Mucosa of descending colon (tissue), 3 donors: ENCODE measurements at regions of chr16 and their contacts with region 1.

Region 1: GRCh38 chr16:52561910-52562741 is 15.2 kb upstream of the TOX3 start:
- DNase-seq: peak; percentile 59 to 72 (median 62)
- ATAC-seq: peak; percentile 80
- H3K4me3 ChIP-seq: no peak overlapping the region
- H3K4me1 ChIP-seq: peaks cover 49% of the 10 kb centered on the region
- CTCF ChIP-seq: no peak

Region 2: DNA sequence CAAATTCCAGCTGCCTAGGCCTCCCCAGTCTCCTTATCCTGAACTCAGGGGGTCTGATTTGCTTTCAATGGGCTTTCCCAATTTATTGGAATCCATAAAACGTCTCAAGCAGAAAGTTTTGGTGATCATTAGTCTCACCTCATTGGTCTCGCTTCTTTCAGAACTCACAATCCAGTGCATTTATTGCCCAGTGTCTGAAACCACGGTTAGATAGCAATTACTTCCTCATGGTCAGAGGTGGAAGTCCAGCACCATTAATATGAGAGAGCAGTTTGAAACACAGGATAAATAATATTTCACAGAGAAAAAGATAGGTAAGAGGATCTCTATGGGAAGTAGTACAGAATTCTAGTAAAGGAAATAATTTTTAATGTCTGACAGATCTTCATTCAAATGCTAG is 143.9 kb before region 1 on chr16:
- intact Hi-C with region 1: no loop called
- DNase-seq: no peak
- ATAC-seq: no peak
- H3K4me3 ChIP-seq: no peak overlapping the region
- H3K4me1 ChIP-seq: no peaks in the 10 kb centered on the region
- CTCF ChIP-seq: no peak

Region 3: GRCh38 chr16:52611817-52612673 is 49.9 kb after region 1 on chr16:
- intact Hi-C with region 1: loop called in 1 of 2 experiments (anchors 5 kb)
- DNase-seq: peak in 2 of 3 donors; percentile 32 to 81
- ATAC-seq: peak; percentile 96
- H3K4me3 ChIP-seq: no peak overlapping the region
- H3K4me1 ChIP-seq: peaks cover 12% of the 10 kb centered on the region
- CTCF ChIP-seq: no peak

Region 4: DNA sequence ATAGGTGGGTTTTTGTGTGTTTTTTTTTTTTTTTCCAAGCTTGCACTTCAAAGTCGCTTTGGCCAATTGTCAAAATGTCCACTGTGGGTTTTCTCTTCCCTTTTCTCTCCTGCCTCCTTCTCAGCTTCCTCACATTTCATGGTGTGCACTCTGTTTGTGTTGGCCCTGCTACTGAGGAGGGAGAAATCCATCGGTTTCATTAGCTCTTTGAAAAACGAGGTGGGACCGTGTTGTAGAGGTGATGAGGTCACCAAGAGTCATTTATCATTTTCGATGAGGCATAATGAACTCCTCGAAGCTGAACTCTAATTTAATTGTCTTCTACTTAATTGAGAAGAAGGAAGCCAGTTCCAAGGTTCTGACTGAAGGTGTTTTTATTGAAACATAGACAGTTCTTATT is 159.2 kb after region 1 on chr16:
- intact Hi-C with region 1: no loop called
- DNase-seq: no peak
- ATAC-seq: no peak
- H3K4me3 ChIP-seq: no peak overlapping the region
- H3K4me1 ChIP-seq: no peaks in the 10 kb centered on the region
- CTCF ChIP-seq: no peak

Region 5: GRCh38 chr16:53566552-53567245 is 1004.6 kb after region 1 on chr16:
- intact Hi-C with region 1: no loop called
- DNase-seq: no peak
- ATAC-seq: no peak
- H3K4me3 ChIP-seq: no peak overlapping the region
- H3K4me1 ChIP-seq: no peaks in the 10 kb centered on the region
- CTCF ChIP-seq: no peak